ENCODE measurements at regions of chr20 and their contacts with region 1.

Region 1: DNA sequence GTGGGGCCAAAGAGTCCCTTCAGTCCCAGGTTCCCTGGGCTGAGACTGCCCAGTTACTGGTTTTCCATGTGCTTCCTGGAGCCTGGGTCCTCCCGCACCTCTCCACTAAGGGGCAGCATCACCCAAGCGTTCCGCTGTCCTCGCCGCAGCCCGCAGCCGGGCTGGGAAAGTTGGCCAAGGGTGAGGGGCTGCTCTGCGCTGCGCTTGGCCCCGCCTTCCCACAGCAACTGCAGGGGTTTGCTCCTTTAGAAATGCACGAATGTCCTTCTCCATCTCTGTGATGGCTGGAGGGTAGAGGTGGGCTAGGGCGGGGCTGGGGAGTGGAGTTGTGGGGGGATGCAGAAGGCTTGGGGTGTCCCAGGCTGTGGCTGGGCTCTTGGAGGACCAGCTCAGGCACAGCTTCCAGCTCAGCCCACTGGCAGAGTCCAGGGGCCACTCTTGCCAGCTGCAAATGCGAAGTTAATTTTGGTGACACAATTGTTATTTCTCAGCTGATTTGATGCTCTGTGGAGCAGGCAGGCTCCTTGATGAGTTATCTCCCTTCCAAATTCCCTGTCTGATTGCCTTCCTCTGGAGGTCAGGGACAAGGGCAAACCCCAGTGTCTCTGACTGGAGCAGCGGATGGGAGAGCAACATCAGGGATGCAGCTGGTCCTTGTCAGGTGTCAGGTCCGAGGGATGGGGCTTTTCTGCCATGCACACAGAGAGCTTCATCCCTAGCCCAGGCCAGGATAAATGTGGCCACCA is 63.2 kb downstream of the NOL4L start:
- DNase-seq: peak; percentile 51 to 79
- ATAC-seq: peak; percentile 87 to 96
- H3K4me3 ChIP-seq: no peak overlapping the region
- H3K27ac ChIP-seq: no peak overlapping the region
- H3K4me1 ChIP-seq: no peaks in the 10 kb centered on the region
- CTCF ChIP-seq: peak; percentile 93
- EP300 ChIP-seq: no peak
- POLR2A ChIP-seq: no peak
- RAD21 ChIP-seq: peak; percentile 97 to 98

Region 2: GRCh38 chr20:32034581-32035425 is 487.1 kb before region 1 on chr20:
- CTCF ChIA-PET with region 1: no interaction called
- POLR2A ChIA-PET with region 1: no interaction called
- DNase-seq: peak in 1 of 2 experiments; percentile 21
- ATAC-seq: peak in 1 of 2 experiments; percentile 30; a peak in 1 of 6 replicates
- H3K4me3 ChIP-seq: no peak overlapping the region
- H3K27ac ChIP-seq: no peak overlapping the region
- H3K4me1 ChIP-seq: peaks cover 16% of the 10 kb centered on the region; the same call in 2 of the 3 replicates
- CTCF ChIP-seq: peak; percentile 7; the same call in 1 of the 3 replicates
- EP300 ChIP-seq: no peak
- POLR2A ChIP-seq: no peak
- RAD21 ChIP-seq: peak; percentile 26 to 52; a peak in 3 of 5 replicates

Region 3: DNA sequence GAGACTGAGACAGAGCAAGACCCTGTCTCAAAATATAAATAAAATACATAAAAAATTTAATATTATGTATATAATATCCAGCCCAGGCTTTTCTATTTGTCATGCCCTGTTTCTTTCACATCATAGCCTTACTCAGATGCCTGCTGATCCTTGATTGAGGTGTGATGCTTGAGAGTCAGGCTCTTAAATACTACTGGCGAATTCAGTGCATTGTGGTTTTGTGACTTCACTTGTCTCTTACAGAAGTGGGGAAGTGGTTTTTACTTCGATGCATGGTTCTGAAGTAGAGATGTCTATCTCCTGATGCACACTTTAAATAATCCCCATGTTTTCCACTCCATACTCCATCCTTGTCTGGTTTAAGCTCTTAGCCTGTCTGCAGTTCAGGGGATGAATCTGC is 134.7 kb before region 1 on chr20:
- CTCF ChIA-PET with region 1: no interaction called
- POLR2A ChIA-PET with region 1: no interaction called
- DNase-seq: no peak
- ATAC-seq: no peak
- H3K4me3 ChIP-seq: no peak overlapping the region
- H3K27ac ChIP-seq: no peak overlapping the region
- H3K4me1 ChIP-seq: peaks cover 19% of the 10 kb centered on the region; the same call in 2 of the 3 replicates
- CTCF ChIP-seq: no peak
- EP300 ChIP-seq: no peak
- POLR2A ChIP-seq: no peak
- RAD21 ChIP-seq: no peak

Region 4: DNA sequence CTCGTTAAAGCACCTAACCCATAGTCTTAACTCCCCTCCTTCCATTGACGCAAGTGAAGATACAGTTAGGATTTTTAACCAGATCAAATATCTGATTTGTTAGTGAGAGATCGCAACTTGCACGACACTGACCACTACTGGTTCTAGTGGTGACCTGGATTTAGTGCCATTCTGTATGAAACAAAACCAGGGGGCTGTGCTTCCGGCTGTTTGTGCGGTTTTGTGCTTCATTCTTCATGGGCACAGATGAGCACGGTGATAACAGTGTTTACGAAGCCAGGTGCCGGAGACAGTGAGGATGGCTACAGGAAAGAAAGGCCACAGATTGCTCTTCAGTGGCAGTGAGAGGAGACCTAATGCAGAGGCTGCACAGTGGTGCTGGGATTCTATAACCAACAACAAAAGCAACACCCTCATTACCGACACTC is 12.3 kb before region 1 on chr20:
- CTCF ChIA-PET with region 1: interaction called, 35 read pairs
- POLR2A ChIA-PET with region 1: no interaction called
- DNase-seq: peak in 1 of 2 experiments; percentile 23
- ATAC-seq: peak; percentile 52 to 64; a peak in 4 of 6 replicates
- H3K4me3 ChIP-seq: no peak overlapping the region
- H3K27ac ChIP-seq: no peak overlapping the region
- H3K4me1 ChIP-seq: no peaks in the 10 kb centered on the region
- CTCF ChIP-seq: 0 out of 3 replicates have a peak, but pooled peaks have one; percentile 8
- EP300 ChIP-seq: no peak
- POLR2A ChIP-seq: no peak
- RAD21 ChIP-seq: peak in 1 of 2 experiments; percentile 38; a peak in 2 of 5 replicates

Region 5: GRCh38 chr20:32564921-32565734 is 43.2 kb after region 1 on chr20:
- CTCF ChIA-PET with region 1: interaction called, 30 read pairs
- POLR2A ChIA-PET with region 1: no interaction called
- DNase-seq: no peak
- ATAC-seq: no peak; a peak in 1 of 6 replicates
- H3K4me3 ChIP-seq: no peak overlapping the region
- H3K27ac ChIP-seq: no peak overlapping the region
- H3K4me1 ChIP-seq: peaks cover 6% of the 10 kb centered on the region; the same call in 1 of the 3 replicates
- CTCF ChIP-seq: no peak
- EP300 ChIP-seq: no peak
- POLR2A ChIP-seq: no peak
- RAD21 ChIP-seq: no peak

Region 6: DNA sequence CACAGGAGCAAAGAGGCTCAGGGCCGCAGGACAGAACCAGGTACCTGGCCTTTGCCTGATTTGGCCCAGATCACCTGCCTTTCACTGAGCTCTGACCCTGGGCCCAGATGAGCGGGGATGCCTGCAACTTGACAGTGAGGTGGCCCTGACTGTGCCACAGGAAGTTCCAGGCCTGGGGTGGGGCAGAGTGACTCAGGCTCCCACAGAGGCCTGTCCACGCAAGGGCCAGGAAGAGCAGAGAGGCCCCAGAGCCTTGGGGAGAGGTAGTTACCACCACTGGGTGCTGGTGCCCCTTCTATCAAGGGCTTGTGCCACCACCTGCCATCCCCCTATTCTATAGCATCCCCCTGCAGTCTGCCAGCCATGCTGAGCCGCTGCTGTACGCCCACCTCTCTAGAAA is 67.3 kb after region 1 on chr20:
- CTCF ChIA-PET with region 1: interaction called, 12 read pairs
- POLR2A ChIA-PET with region 1: no interaction called
- DNase-seq: no peak
- ATAC-seq: no peak
- H3K4me3 ChIP-seq: no peak overlapping the region
- H3K27ac ChIP-seq: 0 out of 6 replicates have a peak overlapping the region, but pooled peaks of 1 of the 2 experiments have one; percentile 7
- H3K4me1 ChIP-seq: 0 out of 3 replicates have a peak, but pooled peaks cover 5% of the 10 kb centered on the region
- CTCF ChIP-seq: no peak
- EP300 ChIP-seq: no peak
- POLR2A ChIP-seq: no peak
- RAD21 ChIP-seq: no peak

Region 7: DNA sequence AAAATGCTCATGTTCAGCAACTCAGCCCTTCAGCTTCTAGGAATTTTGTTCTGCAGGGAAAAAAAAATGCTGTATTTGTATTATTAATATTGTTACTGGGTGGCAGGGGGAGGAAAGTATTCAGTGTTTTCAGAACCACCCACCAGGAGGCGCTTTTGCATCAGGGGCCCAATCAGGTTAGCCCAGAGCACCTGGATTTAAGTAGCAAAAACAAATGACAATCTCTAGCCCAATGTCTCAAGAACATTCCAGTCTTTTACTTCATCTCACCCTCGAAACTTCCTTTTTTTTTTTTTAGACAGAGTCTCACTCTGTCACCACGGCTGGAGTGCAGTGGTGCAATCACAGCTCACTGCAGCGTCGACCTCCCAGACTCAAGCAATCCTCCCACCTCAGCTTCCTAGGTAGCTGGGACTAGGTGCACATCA is 152.4 kb after region 1 on chr20:
- CTCF ChIA-PET with region 1: interaction called, 13 read pairs
- POLR2A ChIA-PET with region 1: no interaction called
- DNase-seq: peak; percentile 66 to 80
- ATAC-seq: peak; percentile 74 to 87
- H3K4me3 ChIP-seq: no peak overlapping the region
- H3K27ac ChIP-seq: no peak overlapping the region
- H3K4me1 ChIP-seq: peaks cover 17% of the 10 kb centered on the region; the same call in 2 of the 3 replicates
- CTCF ChIP-seq: peak; percentile 93
- EP300 ChIP-seq: no peak
- POLR2A ChIP-seq: no peak
- RAD21 ChIP-seq: peak; percentile 95 to 96

Measured in A549 (cell line).